ENCODE measurements at regions of chr9 and their contacts with region 1.

Region 1: DNA sequence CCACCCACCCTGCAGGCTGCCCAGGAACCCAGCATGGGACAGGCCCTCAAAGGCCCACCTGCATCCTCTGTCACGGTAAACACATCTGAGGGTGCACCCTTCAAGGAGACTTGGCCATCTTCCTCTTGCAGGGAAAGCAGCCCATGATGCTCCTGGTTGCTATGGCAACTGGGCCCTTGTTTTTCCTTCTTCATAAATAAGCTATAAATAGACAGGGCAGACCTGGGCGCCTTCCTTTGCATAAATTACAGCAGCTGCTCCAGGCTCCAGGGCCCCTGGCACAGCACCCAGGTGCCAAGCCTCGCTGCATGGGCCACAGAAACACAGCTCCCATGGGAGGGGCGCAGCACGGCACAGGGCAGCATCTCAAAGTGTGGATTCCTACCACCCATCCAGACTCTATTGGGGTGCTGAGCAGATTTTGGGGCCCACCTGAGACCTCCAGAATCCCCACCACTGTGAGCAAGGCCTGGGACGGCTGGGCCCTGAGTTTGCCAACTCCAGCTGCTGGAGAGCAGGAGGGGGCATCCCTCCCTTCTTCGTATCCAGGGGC is 5.8 kb upstream of the PSMB7 start:
- DNase-seq: no peak
- ATAC-seq: peak; percentile 43

Region 2: GRCh38 chr9:124537926-124538325 is 116.9 kb after region 1 on chr9:
- intact Hi-C with region 1: loop called (anchors 2 kb)
- DNase-seq: no peak
- ATAC-seq: no peak